ENCODE measurements at regions of chr1 and their contacts with region 1.

Region 1: GRCh38 chr1:222736972-222737371 is at the start of gene FAM177B:
- H3K4me3 Mint-ChIP-seq: no peak within 1 kb of the TSS
- H3K27ac Mint-ChIP-seq: no peak within 1 kb of the TSS
- H3K4me1 Mint-ChIP-seq: peaks cover 11% of the 10 kb centered on the region
- H3K27me3 Mint-ChIP-seq: peaks cover 16% of the 10 kb centered on the region

Region 2: GRCh38 chr1:222373216-222373615 is 363.8 kb before region 1 on chr1:
- intact Hi-C with region 1: no loop called
- H3K4me3 Mint-ChIP-seq: no peak overlapping the region
- H3K27ac Mint-ChIP-seq: no peak overlapping the region
- H3K4me1 Mint-ChIP-seq: no peaks in the 10 kb centered on the region
- H3K27me3 Mint-ChIP-seq: no peaks in the 10 kb centered on the region

Region 3: GRCh38 chr1:222814536-222815439 is 77.8 kb after region 1 on chr1 and contains the start of gene DISP1:
- intact Hi-C with region 1: loop called (anchors 5 kb)
- H3K4me3 Mint-ChIP-seq: peak within 1 kb of the TSS; percentile 89
- H3K27ac Mint-ChIP-seq: peak within 1 kb of the TSS; percentile 89
- H3K4me1 Mint-ChIP-seq: peaks cover 26% of the 10 kb centered on the region
- H3K27me3 Mint-ChIP-seq: no peaks in the 10 kb centered on the region

Region 4: GRCh38 chr1:223091896-223092295 is 354.9 kb after region 1 on chr1:
- intact Hi-C with region 1: loop called (anchors 5 kb)
- H3K4me3 Mint-ChIP-seq: no peak overlapping the region
- H3K27ac Mint-ChIP-seq: no peak overlapping the region
- H3K4me1 Mint-ChIP-seq: no peaks in the 10 kb centered on the region
- H3K27me3 Mint-ChIP-seq: peaks cover 9% of the 10 kb centered on the region

Measured in dendritic cell treated with granulocyte-macrophage colony-stimulating factor and Interleukin-4, amounts not matched to agents 40 ng/mL and 50 ng/mL, for 4 days (primary cell).